ENCODE measurements at regions of chr16 and their contacts with region 1.

Region 1: DNA sequence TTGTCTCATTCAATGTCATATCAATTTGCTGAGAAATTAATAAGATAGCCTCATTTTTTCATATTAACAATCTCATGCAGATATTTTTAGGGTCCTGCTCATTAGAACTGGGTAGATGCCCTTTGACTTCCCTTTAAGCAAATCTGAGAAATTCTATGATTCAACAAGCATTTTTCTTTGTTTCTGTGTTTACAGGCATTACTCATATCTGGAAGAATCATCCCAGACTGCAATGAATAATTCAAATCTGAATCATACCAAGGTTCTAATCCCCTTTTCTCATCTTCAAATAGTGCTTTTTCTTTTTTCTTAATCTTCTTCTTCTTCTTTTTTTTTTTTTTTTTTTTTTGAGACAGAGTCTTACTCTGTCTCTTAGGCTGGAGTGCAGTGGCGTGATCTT is 69.2 kb upstream of the KIFC3 start:
- DNase-seq: no peak
- H3K4me3 Mint-ChIP-seq: no peak overlapping the region
- H3K27ac Mint-ChIP-seq: no peak overlapping the region
- H3K4me1 Mint-ChIP-seq: peaks cover 5% of the 10 kb centered on the region
- H3K27me3 Mint-ChIP-seq: peaks cover 2% of the 10 kb centered on the region

Region 2: DNA sequence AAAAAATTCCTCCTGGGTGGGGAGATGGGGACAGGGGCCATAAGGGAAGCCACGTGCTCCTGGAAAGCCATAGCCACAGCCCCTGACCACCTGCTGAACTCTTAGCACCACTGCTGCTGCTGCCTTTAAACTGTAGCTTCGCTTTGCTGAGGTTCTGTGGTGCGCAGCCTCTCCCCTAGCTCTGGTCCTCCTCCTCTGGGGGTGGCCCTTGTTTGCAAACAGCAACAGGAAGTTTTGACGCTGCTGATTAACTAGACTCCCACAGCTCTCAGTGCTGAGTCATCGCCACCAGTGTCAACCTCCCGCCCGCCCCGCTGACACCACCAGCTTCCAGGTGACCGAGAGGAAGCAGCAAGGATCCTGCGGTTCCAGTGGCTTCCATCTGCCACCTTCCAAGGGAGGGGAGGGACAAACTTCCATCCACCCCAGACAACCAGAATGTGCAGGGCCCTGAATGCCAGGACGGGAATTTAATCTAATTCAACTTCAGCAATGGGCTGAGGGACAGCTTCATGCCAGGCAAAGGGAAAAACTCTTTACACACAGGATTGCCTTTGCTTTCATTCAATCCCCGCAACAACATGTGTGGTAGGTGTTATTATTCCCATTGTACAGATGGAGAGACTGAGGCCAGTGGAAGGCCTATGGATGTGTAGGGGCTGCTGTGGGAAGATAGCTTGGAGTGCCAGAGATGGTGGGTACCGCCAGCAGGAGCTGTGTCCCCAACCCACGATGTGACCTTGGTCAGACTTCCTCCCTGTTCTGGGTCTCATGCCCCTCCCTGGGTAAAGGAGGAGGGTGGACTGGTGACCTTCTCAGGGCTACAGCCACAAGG is 61.0 kb before region 1 on chr16:
- CTCF ChIA-PET with region 1: no interaction called
- intact Hi-C with region 1: loop called (anchors 2 kb)
- DNase-seq: peak; percentile 82
- H3K4me3 Mint-ChIP-seq: no peak overlapping the region
- H3K27ac Mint-ChIP-seq: no peak overlapping the region
- H3K4me1 Mint-ChIP-seq: peaks cover 21% of the 10 kb centered on the region
- H3K27me3 Mint-ChIP-seq: peaks cover 40% of the 10 kb centered on the region

Measured in activated naive CD4-positive, alpha-beta T cell treated with anti-CD3 and anti-CD28 coated beads for 36 hours (primary cell).